Psoas muscle (tissue), 8 donors: ENCODE measurements at regions of chr3 and their contacts with region 1.

Region 1: DNA sequence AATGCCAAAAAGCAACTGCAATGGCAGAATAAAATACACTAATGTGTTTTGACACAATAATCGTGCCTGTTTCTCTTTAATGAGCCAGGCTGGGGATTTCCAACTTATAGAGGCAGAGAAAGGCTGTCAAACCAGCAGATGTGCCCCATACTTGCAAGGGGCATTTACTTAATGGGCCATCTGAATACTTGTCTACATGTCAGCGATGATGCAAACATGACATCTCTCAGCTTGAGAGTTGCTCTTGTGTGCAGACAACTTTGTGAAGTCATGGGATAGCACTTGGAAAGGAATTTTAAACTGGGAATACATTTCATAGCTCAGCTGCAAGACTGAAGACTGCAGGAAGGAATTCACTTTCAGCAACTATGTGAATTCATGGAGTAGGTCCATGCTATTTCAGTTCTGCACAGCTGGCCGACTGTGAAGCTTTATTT is 127.4 kb upstream of the ADAMTS9 start:
- DNase-seq: no peak
- ATAC-seq: peak; percentile 47 to 75 (median 72)
- H3K4me3 ChIP-seq: no peak overlapping the region
- H3K27ac ChIP-seq: peak overlapping the region; percentile 64
- H3K4me1 ChIP-seq: peaks cover 25% of the 10 kb centered on the region
- H3K27me3 ChIP-seq: no peaks in the 10 kb centered on the region
- CTCF ChIP-seq: no peak

Region 2: DNA sequence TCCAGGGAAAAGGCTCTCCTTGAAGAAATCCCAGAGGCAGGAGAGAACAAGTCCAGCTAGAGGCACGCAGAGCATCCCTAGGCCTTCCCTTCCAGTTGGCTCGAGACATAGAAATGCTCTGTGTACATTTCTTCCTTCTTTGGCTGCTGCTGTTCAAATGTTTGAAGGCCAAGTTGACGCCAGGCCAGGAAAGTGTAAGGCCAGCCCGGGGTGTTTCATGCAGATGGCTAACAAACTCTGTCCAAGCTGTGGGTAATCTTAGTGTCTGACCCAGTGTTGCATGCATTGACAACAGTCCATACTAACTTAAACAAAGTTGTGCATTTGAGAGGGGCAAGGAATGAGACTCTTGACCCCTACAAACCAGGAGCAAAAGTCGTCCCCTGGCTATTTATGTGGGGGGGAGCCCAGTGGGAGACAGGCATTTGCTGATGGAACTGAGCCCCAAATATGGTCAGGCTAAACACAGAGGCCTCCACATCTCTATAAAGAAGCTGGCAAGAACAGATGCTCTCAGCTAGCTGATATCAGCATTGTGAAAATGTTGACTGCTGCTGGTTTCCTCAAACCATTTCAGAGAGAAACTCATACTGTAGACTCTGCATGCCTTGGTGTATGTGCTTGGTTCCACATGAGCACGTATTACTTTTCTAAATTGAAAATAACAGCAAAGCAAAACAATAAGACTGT is 266.9 kb before region 1 on chr3:
- intact Hi-C with region 1: no loop called
- DNase-seq: peak; percentile 41 to 57
- ATAC-seq: peak; percentile 23 to 79 (median 54)
- H3K4me3 ChIP-seq: no peak overlapping the region
- H3K27ac ChIP-seq: no peak overlapping the region
- H3K4me1 ChIP-seq: peaks cover 3% of the 10 kb centered on the region
- H3K27me3 ChIP-seq: no peaks in the 10 kb centered on the region
- CTCF ChIP-seq: no peak

Region 3: DNA sequence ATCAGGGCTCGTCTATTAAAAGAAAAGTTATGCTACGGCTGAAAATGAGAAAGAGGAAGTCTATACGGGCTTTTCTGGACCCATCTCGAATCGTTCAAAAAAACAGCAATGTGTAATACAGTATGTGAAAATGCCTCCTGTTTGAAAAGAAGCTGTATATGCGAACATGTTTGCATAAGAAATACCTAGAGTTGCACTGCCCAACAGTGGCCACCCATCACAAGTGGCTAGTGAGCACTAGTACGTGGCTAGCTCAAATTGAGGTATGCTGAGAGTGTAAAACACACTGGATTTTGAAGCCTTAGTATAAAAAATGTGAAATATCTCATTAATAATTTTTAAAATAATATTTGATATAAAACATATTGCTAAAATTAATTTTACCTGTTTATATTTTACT is 158.3 kb before region 1 on chr3:
- intact Hi-C with region 1: no loop called
- DNase-seq: no peak
- ATAC-seq: no peak
- H3K4me3 ChIP-seq: no peak overlapping the region
- H3K27ac ChIP-seq: no peak overlapping the region
- H3K4me1 ChIP-seq: peaks cover 5% of the 10 kb centered on the region
- H3K27me3 ChIP-seq: no peaks in the 10 kb centered on the region
- CTCF ChIP-seq: no peak

Region 4: DNA sequence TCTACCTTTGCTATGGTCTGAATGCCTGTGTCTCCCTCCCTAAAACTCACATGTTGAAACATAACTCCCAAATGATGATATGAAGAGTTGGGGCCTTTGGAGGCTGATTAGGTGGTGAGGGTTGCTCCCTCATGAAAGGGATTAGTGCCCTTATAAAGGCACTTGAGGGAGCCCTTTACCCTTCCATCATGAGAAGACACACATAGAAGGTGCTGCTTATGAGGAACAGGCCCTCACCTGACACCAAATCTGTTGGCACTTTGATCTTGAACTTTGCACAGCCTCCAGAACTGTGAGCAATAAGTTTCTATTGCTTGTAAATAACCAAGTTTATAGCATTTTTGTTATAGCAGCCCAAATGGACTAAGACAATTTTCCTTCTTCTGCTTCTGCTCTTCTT is 51.2 kb before region 1 on chr3:
- intact Hi-C with region 1: loop called in 1 of 2 experiments (anchors 10 kb)
- DNase-seq: no peak
- ATAC-seq: no peak
- H3K4me3 ChIP-seq: no peak overlapping the region
- H3K27ac ChIP-seq: no peak overlapping the region
- H3K4me1 ChIP-seq: peaks cover 22% of the 10 kb centered on the region
- H3K27me3 ChIP-seq: no peaks in the 10 kb centered on the region
- CTCF ChIP-seq: no peak